ENCODE measurements at regions of chr13 and their contacts with region 1.

Region 1: GRCh38 chr13:32639502-32640105 is 53.4 kb downstream of the PDS5B start:
- DNase-seq: peak; percentile 67
- H3K4me3 ChIP-seq: no peak overlapping the region
- H3K27ac ChIP-seq: no peak overlapping the region
- H3K4me1 ChIP-seq: peaks cover 3% of the 10 kb centered on the region
- H3K27me3 ChIP-seq: no peaks in the 10 kb centered on the region
- CTCF ChIP-seq: peak; percentile 69 to 74
- POLR2A ChIP-seq: no peak

Region 2: DNA sequence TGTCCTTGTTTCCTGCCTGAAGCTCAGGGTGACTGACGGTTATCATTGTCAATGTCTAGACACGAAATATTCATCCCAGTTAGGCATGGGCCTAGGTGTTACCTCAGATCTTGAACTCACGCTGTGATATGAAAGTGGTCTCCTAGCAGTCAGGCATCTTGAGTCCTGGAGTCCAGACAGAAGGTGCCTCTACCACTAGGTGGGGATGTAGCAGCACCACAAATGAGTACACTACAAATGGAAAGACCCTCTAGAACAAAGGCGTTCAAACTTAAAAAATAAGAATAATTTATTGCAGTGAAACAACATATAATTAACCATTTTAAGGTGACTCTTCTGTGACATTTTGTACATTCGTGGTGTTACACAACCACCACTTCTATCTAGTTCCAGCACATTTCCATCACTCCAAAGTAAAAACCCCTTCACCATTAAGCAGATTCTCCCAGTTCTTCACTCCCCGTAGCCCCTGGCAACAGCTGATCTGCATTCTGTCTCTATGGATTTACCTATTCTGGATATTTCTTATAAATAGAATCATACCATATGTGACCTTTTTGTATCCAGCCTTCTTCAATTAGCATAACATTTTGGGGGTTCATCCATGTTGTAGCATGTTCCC is 619.9 kb before region 1 on chr13:
- CTCF ChIA-PET with region 1: no interaction called
- POLR2A ChIA-PET with region 1: no interaction called
- dilution Hi-C with region 1: no loop called
- intact Hi-C with region 1: loop called (anchors 10 kb)
- DNase-seq: peak; percentile 84
- H3K4me3 ChIP-seq: no peak overlapping the region
- H3K27ac ChIP-seq: no peak overlapping the region
- H3K4me1 ChIP-seq: no peaks in the 10 kb centered on the region
- H3K27me3 ChIP-seq: peaks cover 0 to 10% of the 10 kb centered on the region in 2 experiments
- CTCF ChIP-seq: peak; percentile 75 to 79
- POLR2A ChIP-seq: no peak

Region 3: DNA sequence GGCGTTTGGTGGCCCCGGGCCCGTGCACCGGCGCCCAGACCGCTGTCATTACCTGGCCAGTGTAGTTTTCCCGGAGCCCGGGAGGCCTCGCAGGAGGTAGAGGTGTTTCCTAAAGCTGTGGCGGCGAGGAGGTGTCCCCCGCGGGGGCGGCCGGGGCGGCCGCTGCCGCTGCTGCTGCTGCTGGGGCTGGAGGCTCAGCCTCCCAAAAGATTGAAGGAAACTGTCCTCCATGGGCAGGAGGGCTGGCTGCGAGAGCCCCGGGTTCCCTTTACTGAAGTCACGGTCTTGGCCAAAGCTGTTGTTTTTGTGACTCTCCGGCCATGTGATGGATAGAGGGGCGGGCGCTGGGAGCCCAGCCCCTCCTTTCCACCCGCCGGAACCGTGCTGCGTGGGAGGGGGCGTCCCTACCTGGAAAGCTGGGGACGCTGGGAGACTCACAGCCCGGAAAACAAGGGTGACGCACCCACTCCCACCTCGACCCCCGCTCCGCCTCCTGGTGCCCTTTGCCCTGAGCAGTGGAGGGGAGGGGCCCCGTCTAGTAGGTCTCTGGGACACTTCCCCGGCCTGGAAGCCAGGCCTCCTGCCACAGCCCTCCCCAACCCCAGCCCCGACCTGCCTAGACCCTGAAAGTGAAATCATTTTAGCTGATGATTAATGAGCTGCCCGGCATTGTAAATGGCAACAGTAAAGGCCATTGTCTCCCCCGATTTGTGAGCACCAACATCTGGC is 211.6 kb before region 1 on chr13 and contains the start of gene N4BP2L1:
- CTCF ChIA-PET with region 1: no interaction called
- POLR2A ChIA-PET with region 1: no interaction called
- dilution Hi-C with region 1: no loop called
- intact Hi-C with region 1: no loop called
- DNase-seq: peak; percentile 56
- H3K4me3 ChIP-seq: peak within 1 kb of the TSS; percentile 48 to 79 (median 62)
- H3K27ac ChIP-seq: no peak within 1 kb of the TSS
- H3K4me1 ChIP-seq: peaks cover 13% of the 10 kb centered on the region
- H3K27me3 ChIP-seq: no peaks in the 10 kb centered on the region
- CTCF ChIP-seq: no peak
- POLR2A ChIP-seq: no peak
- total RNA-seq, gene N4BP2L1: 1.8 and 2.1 TPM in 2 replicates

Region 4: GRCh38 chr13:32581177-32581786 is 58.3 kb before region 1 on chr13:
- CTCF ChIA-PET with region 1: interaction called, 30 read pairs
- POLR2A ChIA-PET with region 1: no interaction called
- dilution Hi-C with region 1: no loop called
- intact Hi-C with region 1: loop called (anchors 1 kb)
- DNase-seq: peak; percentile 26
- H3K4me3 ChIP-seq: no peak overlapping the region
- H3K27ac ChIP-seq: no peak overlapping the region
- H3K4me1 ChIP-seq: peaks cover 10% of the 10 kb centered on the region
- H3K27me3 ChIP-seq: peaks cover 0 to 1% of the 10 kb centered on the region in 2 experiments
- CTCF ChIP-seq: peak; percentile 21 to 26
- POLR2A ChIP-seq: no peak

Region 5: DNA sequence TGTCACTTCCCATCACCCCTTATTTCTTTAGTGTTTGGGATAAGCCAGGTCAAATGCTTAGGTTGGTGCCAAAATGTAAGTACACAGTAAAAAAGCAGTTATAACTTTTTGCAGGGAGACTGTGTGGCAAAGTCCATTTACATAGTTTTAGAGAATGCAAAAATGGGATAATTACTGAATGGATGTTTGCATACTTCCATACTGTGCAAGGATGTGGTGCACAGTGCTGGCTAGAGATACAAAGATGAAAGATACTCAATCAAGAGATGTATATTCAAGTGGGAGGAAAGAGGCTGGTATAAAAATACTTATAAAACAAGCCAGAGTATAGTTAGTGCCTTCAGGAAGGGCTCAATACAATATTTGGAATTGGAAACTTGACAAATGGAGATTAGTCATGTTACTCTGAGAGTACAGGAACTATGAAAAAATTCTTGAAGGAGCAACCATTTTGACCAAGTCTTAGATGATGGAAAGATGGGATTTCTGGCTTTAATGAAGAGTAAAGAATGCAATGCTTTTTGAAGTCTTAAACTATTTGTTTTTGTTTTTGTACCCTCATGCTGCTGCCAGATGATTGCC is 45.4 kb before region 1 on chr13:
- CTCF ChIA-PET with region 1: interaction called, 70 read pairs
- POLR2A ChIA-PET with region 1: interaction called, 4 read pairs
- dilution Hi-C with region 1: no loop called
- intact Hi-C with region 1: no loop called
- DNase-seq: peak; percentile 13
- H3K4me3 ChIP-seq: no peak overlapping the region
- H3K27ac ChIP-seq: no peak overlapping the region
- H3K4me1 ChIP-seq: peaks cover 6% of the 10 kb centered on the region
- H3K27me3 ChIP-seq: no peaks in the 10 kb centered on the region
- CTCF ChIP-seq: no peak
- POLR2A ChIP-seq: no peak

Region 6: GRCh38 chr13:32627793-32628192 is 11.8 kb before region 1 on chr13:
- CTCF ChIA-PET with region 1: interaction called, 11 read pairs
- POLR2A ChIA-PET with region 1: no interaction called
- dilution Hi-C with region 1: no loop called
- intact Hi-C with region 1: no loop called
- DNase-seq: no peak
- H3K4me3 ChIP-seq: no peak overlapping the region
- H3K27ac ChIP-seq: no peak overlapping the region
- H3K4me1 ChIP-seq: no peaks in the 10 kb centered on the region
- H3K27me3 ChIP-seq: no peaks in the 10 kb centered on the region
- CTCF ChIP-seq: no peak
- POLR2A ChIP-seq: no peak

Region 7: GRCh38 chr13:32650705-32651311 is 11.2 kb after region 1 on chr13:
- CTCF ChIA-PET with region 1: interaction called, 64 read pairs
- POLR2A ChIA-PET with region 1: no interaction called
- dilution Hi-C with region 1: no loop called
- intact Hi-C with region 1: no loop called
- DNase-seq: peak; percentile 77
- H3K4me3 ChIP-seq: no peak overlapping the region
- H3K27ac ChIP-seq: no peak overlapping the region
- H3K4me1 ChIP-seq: no peaks in the 10 kb centered on the region
- H3K27me3 ChIP-seq: no peaks in the 10 kb centered on the region
- CTCF ChIP-seq: peak; percentile 73 to 78
- POLR2A ChIP-seq: no peak

Region 8: GRCh38 chr13:32669030-32669646 is 29.5 kb after region 1 on chr13:
- CTCF ChIA-PET with region 1: interaction called, 16 read pairs
- POLR2A ChIA-PET with region 1: no interaction called
- dilution Hi-C with region 1: no loop called
- intact Hi-C with region 1: no loop called
- DNase-seq: peak; percentile 61
- H3K4me3 ChIP-seq: no peak overlapping the region
- H3K27ac ChIP-seq: no peak overlapping the region
- H3K4me1 ChIP-seq: no peaks in the 10 kb centered on the region
- H3K27me3 ChIP-seq: no peaks in the 10 kb centered on the region
- CTCF ChIP-seq: peak; percentile 44 to 54
- POLR2A ChIP-seq: no peak

Region 9: GRCh38 chr13:33642374-33643068 is 1002.9 kb after region 1 on chr13:
- CTCF ChIA-PET with region 1: no interaction called
- POLR2A ChIA-PET with region 1: no interaction called
- dilution Hi-C with region 1: no loop called
- intact Hi-C with region 1: no loop called
- DNase-seq: no peak
- H3K4me3 ChIP-seq: no peak overlapping the region
- H3K27ac ChIP-seq: no peak overlapping the region
- H3K4me1 ChIP-seq: no peaks in the 10 kb centered on the region
- H3K27me3 ChIP-seq: no peaks in the 10 kb centered on the region
- CTCF ChIP-seq: no peak
- POLR2A ChIP-seq: no peak